CD14-positive monocyte (primary cell): ENCODE measurements at regions of chr4 and their contacts with region 1.

Region 1: DNA sequence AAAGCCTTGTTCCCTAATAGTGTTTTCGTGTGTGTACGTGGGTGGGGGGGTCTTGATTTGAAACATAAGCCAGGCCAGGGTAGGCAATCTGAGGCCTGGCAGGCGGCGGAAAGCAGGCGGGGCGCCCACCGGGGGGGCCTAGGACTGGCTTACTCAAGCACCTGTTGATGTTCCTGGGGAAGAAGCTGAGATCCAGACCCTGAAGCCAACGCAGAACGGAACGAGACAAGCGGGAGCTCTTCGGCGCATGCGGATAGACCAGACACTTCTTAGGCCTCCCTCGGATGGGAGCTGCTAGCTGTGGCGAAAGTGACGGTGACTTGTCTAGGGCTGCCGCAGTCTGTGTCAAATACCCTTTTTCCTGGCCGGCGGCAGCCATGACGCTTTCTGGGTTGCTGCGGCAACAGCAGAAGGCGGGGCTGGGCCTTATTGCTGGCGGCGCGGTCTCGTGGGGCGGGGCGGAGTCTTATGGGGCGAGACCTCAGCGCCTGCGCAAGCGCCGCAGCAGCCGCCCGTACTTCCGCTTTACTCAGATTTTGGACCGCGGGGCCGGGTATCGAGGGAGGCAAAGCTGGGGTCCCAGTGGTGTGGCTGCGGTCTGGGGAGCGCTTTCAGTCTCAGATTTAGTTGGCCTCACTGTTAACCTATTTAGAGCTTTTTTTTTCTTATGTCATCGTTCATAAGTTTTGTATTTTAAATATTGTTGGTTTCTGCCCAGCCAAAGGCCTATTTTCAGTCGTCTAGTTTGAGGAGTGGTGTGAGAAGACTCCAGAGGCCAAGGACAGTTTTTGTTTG is at the start of gene SPATA4:
- DNase-seq: peak; percentile 91 to 95 (median 93)
- H3K4me3 ChIP-seq: peak within 1 kb of the TSS; percentile 28 to 78 (median 62)
- H3K4me3 Mint-ChIP-seq: peak within 1 kb of the TSS; percentile 83 to 93
- H3K27ac ChIP-seq: peak within 1 kb of the TSS; percentile 17 to 76
- H3K27ac Mint-ChIP-seq: peak within 1 kb of the TSS; percentile 84 to 95 (median 92)
- H3K4me1 ChIP-seq: peaks cover 7 to 10% of the 10 kb centered on the region in 2 donors
- H3K4me1 Mint-ChIP-seq: peaks cover 9% of the 10 kb centered on the region
- H3K27me3 ChIP-seq: peaks cover 3 to 6% of the 10 kb centered on the region in 2 donors
- H3K27me3 Mint-ChIP-seq: peaks cover 3 to 13% (median 4%) of the 10 kb centered on the region in 3 donors
- CTCF ChIP-seq: no peak
- polyA plus RNA-seq, gene SPATA4: not detected

Region 2: GRCh38 chr4:176319704-176320339 is 124.4 kb after region 1 on chr4 and contains the start of gene SPCS3:
- intact Hi-C with region 1: loop called (anchors 2 to 5 kb)
- DNase-seq: peak; percentile 95 to 96 (median 96)
- H3K4me3 ChIP-seq: peak within 1 kb of the TSS; percentile 85 to 90 (median 90)
- H3K4me3 Mint-ChIP-seq: peak within 1 kb of the TSS; percentile 83 to 96
- H3K27ac ChIP-seq: peak within 1 kb of the TSS; percentile 93 to 96
- H3K27ac Mint-ChIP-seq: peak within 1 kb of the TSS; percentile 84 to 96 (median 94)
- H3K4me1 ChIP-seq: peaks cover 29 to 52% of the 10 kb centered on the region in 2 donors
- H3K4me1 Mint-ChIP-seq: peaks cover 49% of the 10 kb centered on the region
- H3K27me3 ChIP-seq: no peaks in the 10 kb centered on the region
- H3K27me3 Mint-ChIP-seq: no peaks in the 10 kb centered on the region
- CTCF ChIP-seq: no peak
- polyA plus RNA-seq, gene SPCS3: 50.4 to 112 (median 107) TPM